ENCODE measurements at regions of chr15 and their contacts with region 1.

Region 1: DNA sequence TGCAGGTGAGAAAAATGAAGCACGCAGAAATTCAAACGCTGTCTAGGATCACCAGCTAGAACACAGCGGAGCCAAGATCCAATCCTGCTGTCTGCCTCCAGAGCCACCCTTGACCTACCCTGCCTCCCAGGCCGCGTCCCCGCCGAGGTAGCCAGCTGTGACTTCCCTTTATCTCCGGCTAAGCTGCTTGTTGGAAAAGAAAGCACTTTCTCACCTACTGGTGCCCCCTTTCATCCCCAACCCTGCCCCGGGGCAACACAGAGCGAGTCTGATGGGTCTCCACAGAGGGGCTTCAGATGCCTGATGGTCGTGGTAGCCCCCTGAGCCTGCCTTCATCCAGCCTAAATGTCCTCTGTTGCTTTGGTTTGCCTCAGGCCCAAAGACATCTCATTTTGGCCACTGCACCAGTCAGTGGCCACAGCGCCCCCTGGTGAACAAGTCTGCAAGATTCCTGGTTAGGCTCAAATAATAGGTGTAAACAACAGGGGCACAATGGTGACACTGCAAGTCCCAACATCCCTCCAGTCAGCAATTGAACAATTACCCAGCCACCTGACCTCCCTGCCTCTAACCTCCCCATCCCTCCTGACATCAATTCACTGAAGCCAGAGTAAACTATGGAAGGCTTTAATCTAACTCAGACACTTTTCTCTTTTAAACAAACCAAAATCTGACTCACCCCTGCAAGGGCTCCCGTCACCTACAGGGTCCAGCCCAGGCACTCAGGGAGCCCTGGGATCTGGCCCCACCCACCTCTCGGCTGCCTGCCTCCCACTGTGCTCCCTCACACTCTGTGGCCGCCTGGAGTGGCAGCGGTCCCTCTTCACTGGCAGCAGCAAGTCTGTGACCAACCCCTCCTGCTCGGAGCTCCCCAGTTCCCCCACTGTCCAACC is 27.3 kb upstream of the BCL2L10 start:
- DNase-seq: peak; percentile 60
- ATAC-seq: peak; percentile 50
- H3K4me3 ChIP-seq: no peak overlapping the region
- H3K27ac ChIP-seq: peak overlapping the region; percentile 5
- H3K4me1 ChIP-seq: peaks cover 65% of the 10 kb centered on the region
- H3K27me3 ChIP-seq: no peaks in the 10 kb centered on the region
- CTCF ChIP-seq: peak; percentile 90
- EP300 ChIP-seq: no peak
- POLR2A ChIP-seq: no peak
- RAD21 ChIP-seq: peak; percentile 82

Region 2: GRCh38 chr15:51782357-51782896 is 357.4 kb before region 1 on chr15:
- CTCF ChIA-PET with region 1: no interaction called
- POLR2A ChIA-PET with region 1: no interaction called
- in situ Hi-C with region 1: no loop called
- intact Hi-C with region 1: loop called (anchors 10 kb)
- DNase-seq: no peak
- ATAC-seq: peak; percentile 47; the same call in 1 of the 3 replicates
- H3K4me3 ChIP-seq: no peak overlapping the region
- H3K27ac ChIP-seq: no peak overlapping the region
- H3K4me1 ChIP-seq: peaks cover 7% of the 10 kb centered on the region
- H3K27me3 ChIP-seq: no peaks in the 10 kb centered on the region; a peak in 1 of 5 replicates
- CTCF ChIP-seq: peak; percentile 76
- EP300 ChIP-seq: no peak
- POLR2A ChIP-seq: no peak
- RAD21 ChIP-seq: no peak

Region 3: GRCh38 chr15:52191207-52191606 is 51.4 kb after region 1 on chr15 and contains the start of gene GNB5:
- CTCF ChIA-PET with region 1: no interaction called
- POLR2A ChIA-PET with region 1: no interaction called
- in situ Hi-C with region 1: no loop called
- intact Hi-C with region 1: no loop called
- DNase-seq: no peak
- ATAC-seq: peak; percentile 56
- H3K4me3 ChIP-seq: no peak within 1 kb of the TSS
- H3K27ac ChIP-seq: no peak within 1 kb of the TSS
- H3K4me1 ChIP-seq: peaks cover 10% of the 10 kb centered on the region
- H3K27me3 ChIP-seq: no peaks in the 10 kb centered on the region
- CTCF ChIP-seq: peak; percentile 32; the same call in 1 of the 2 replicates
- EP300 ChIP-seq: no peak
- POLR2A ChIP-seq: no peak
- RAD21 ChIP-seq: no peak
- total RNA-seq, gene GNB5: 13.7 and 17.1 TPM in 2 replicates

Measured in HepG2 (cell line).